ENCODE measurements at regions of chr12 and their contacts with region 1.

Region 1: DNA sequence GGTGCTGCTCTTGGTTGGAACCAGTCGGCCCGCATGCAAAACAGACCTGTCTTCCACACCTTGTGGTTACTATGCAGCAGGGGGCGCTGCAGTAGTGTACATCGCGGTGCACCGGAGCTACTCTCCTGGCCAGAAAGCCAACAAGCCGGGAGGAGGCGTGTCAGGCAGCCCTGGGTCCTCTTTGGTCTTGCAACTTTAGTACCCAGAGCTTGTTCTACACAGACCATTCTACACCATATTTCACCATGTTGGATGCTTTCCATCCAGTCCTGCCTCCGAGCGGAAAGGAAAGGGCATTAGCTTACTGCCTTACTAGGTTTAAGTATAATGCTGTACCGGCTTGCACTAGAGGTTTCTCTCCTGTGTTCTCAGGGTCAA is 927 bp upstream of the TMTC2 start:
- DNase-seq: peak; percentile 96
- ATAC-seq: peak; percentile 66
- H3K4me3 Mint-ChIP-seq: peak overlapping the region; percentile 79
- H3K27ac Mint-ChIP-seq: no peak overlapping the region
- H3K4me1 Mint-ChIP-seq: peaks cover 10% of the 10 kb centered on the region
- H3K27me3 Mint-ChIP-seq: peaks cover 14% of the 10 kb centered on the region

Region 2: DNA sequence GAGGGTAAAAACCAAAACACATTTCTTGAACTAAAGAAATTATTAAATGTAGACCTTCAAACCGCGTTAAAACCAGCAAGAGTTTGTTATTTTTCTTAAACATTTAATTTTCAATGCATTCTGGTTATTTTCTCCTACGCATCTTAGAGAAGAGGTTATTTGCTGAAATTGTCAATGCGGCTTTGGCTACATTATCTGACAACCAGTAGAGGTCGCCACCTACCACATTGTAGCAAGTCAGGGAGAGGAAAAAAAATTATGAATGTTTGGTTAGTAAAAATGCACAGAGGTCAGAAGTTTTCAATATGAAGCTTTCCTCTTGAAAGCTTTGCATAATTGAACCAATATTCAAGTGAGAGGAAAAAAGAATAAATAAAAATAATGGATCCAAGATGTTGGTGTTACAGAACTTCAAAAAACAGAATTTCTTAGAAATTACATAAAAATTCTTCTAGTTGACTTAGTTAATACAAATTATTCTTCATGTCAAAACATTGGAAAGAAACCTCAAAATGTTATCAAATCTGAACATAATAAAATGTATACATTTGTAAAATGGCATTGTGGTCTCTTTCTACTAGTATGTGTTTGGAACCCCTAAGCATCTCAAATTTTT is 158.5 kb before region 1 on chr12:
- CTCF ChIA-PET with region 1: interaction called, 4 read pairs
- POLR2A ChIA-PET with region 1: no interaction called
- intact Hi-C with region 1: loop called (anchors 2 to 5 kb)
- DNase-seq: peak; percentile 45
- ATAC-seq: peak; percentile 47
- H3K4me3 Mint-ChIP-seq: no peak overlapping the region
- H3K27ac Mint-ChIP-seq: no peak overlapping the region
- H3K4me1 Mint-ChIP-seq: no peaks in the 10 kb centered on the region
- H3K27me3 Mint-ChIP-seq: peaks cover 5% of the 10 kb centered on the region

Region 3: DNA sequence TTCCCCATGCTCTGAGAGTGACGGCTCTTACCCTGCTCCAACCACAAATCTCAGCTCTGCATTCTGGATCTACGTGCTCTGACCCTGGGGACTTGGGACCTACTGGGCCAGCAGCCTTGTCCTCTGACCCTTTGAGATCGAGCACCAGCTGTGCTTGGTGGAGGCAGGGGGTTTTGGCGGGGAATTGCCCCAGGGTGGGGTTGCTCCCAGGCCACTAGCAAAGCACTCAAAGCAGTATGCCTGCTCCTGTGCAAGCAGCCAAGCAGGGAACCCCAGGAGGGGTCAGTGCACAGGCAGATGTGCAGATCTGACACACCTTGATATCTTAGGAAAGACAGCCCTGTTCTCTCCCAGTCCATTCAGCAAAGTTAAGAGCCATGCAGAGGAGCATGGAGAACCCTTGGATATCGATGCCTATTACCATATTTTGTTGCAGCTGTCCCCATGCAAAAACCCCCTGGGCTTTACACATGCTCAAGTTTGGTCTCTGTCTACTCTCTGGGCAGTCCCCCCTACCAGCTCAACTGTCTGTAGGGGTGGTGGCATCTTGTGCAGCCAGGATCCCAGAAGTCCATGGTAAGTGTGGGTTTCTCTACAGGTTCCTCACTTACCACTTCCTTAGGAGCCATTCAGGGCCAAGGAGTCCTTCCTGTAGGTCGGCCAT is 319.9 kb after region 1 on chr12:
- CTCF ChIA-PET with region 1: no interaction called
- POLR2A ChIA-PET with region 1: no interaction called
- intact Hi-C with region 1: loop called in 1 of 2 experiments (anchors 5 kb)
- DNase-seq: no peak
- ATAC-seq: no peak
- H3K4me3 Mint-ChIP-seq: no peak overlapping the region
- H3K27ac Mint-ChIP-seq: no peak overlapping the region
- H3K4me1 Mint-ChIP-seq: no peaks in the 10 kb centered on the region
- H3K27me3 Mint-ChIP-seq: no peaks in the 10 kb centered on the region

Region 4: DNA sequence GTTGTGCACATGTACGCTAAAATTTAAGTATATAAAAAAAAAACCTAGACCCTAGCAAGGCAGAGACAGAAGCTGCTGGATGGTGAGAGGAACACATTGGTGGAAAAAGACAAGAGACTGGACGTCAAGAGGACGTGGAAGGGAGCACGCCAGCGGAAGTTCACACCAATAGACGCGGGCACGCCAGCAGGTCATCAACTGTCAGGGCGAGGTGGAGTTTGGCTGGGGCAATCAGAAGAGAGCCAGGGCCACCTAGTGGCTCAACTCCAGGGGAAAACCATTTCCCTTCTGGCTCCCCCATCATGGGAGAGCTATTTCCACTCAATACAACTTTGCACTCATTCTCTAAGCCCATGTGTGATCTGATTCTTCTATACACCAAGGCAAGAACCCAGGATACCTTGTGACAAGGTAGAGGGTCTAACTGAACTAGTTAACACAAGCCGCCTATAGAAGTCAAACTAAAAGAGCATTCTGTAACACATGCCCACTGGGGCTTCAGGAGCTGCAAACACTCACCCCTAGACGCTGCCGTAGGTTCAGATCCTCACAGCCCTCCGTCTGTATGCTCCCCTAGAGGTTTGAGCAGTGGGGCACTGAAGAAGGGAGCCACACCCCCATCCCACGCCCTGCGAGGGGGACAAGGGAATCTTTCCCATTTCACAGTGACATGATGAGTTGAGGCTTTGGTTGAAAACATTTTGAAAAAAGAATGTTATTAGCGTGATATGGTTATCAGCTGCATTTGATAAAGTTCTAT is 703.6 kb after region 1 on chr12:
- CTCF ChIA-PET with region 1: no interaction called
- POLR2A ChIA-PET with region 1: no interaction called
- intact Hi-C with region 1: loop called in 1 of 2 experiments (anchors 1 kb)
- DNase-seq: peak; percentile 18
- ATAC-seq: no peak
- H3K4me3 Mint-ChIP-seq: no peak overlapping the region
- H3K27ac Mint-ChIP-seq: no peak overlapping the region
- H3K4me1 Mint-ChIP-seq: no peaks in the 10 kb centered on the region
- H3K27me3 Mint-ChIP-seq: no peaks in the 10 kb centered on the region

Region 5: DNA sequence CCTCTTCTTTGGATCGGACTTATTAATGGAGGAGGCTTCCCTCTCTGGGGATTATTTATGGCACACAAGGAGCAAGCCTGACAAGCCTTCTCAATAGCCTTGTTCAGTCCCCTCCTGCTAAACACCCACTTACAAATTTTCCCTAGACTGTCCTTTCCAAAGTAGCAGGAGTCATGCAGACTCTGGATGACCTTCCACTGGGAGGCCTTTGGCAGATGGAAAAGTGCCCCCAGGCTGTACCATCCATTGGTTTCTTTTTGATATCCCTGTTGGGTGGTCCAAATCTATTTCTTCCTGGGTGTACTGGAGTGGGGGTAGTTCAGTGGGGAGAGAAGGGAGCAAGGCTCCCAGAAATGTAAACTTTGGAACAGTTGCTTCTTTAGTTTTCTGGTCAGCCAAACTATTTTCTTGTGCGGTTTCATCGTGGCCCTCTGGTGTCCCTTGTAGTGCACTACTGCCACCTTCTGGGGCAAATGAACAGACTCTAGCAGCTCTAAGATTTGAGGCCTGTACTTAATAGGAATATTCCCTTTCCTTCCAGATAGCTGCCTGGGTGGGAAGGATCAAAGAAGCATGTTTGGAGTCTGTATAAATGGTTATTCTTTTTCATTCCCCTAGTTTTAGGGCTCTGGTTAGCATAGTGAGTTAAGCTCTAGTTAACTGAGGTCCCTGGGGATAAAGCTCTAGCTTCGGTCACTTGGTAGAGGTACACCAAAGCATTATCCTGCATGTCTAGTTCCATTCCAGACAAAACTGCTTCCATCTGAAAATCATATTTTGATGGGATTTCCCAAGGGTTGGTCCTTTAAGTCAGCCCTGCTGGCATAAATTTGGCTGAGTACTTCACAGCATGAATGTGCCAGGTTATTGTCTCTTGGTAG is 1817.4 kb after region 1 on chr12:
- CTCF ChIA-PET with region 1: interaction called, 3 read pairs
- POLR2A ChIA-PET with region 1: no interaction called
- intact Hi-C with region 1: loop called in 1 of 2 experiments (anchors 2 kb)
- DNase-seq: peak; percentile 51
- ATAC-seq: peak; percentile 55
- H3K4me3 Mint-ChIP-seq: no peak overlapping the region
- H3K27ac Mint-ChIP-seq: no peak overlapping the region
- H3K4me1 Mint-ChIP-seq: no peaks in the 10 kb centered on the region
- H3K27me3 Mint-ChIP-seq: no peaks in the 10 kb centered on the region

Measured in activated CD4-positive, alpha-beta T cell treated with anti-CD3 and anti-CD28 coated beads for 36 hours (primary cell).